IMR-90 (cell line): ENCODE measurements at regions of chr17 and their contacts with region 1.

Region 1: DNA sequence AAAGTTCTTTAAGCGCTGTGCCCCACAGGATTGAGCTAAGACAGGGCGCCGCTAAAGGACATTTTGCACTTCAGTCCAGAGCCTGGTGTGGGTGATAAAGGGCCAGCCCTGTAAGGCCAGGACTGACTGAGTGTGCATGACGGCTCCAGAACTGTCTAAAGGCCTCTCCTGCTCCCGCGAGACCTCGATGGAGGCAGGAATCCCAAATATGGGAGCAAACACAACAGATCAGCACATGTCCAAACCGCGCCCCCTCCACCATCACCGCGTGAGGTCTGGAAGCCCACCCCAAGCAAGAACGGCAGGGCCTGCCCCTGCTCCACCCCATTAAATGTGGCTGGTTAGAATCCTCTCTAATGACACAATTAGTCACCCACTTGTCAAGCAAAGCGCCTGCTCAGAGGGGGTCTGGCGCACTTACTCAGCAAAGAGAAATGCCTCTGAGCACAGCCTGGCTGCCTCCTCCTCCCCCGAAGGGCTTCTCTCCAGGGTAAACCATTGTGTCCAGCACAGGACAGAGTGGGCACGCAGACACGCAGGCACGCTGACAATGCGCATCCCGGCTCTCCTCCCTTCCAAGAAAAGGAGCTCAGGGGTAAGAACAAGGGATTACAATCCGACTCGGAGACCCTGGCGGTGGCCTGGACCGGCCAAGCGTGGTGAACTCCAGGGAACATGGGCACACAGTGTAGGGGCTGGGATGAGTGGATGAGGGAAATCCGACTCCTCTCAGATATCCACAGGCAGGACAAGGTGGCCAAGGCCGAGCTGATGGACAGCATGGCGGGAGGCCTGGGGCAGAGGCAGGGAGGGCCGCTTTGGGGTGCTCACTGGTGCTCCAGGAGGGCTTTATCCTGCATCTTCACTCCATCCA is 1.5 kb downstream of the MXRA7 start:
- DNase-seq: peak; percentile 99
- ATAC-seq: peak; percentile 74
- H3K4me3 ChIP-seq: peak overlapping the region; percentile 58
- H3K27ac ChIP-seq: peak overlapping the region; percentile 90
- H3K4me1 ChIP-seq: peaks cover 27% of the 10 kb centered on the region
- H3K27me3 ChIP-seq: no peaks in the 10 kb centered on the region
- CTCF ChIP-seq: 0 out of 2 replicates have a peak, but pooled peaks have one; percentile 8
- POLR2A ChIP-seq: peak; percentile 97
- RAD21 ChIP-seq: no peak

Region 2: GRCh38 chr17:76687308-76688164 is 21.8 kb before region 1 on chr17:
- CTCF ChIA-PET with region 1: interaction called, 3 read pairs
- POLR2A ChIA-PET with region 1: no interaction called
- dilution Hi-C with region 1: no loop called
- in situ Hi-C with region 1: no loop called
- intact Hi-C with region 1: loop called (anchors 1 kb)
- DNase-seq: no peak
- ATAC-seq: no peak
- H3K4me3 ChIP-seq: no peak overlapping the region
- H3K27ac ChIP-seq: peak overlapping the region; percentile 75
- H3K4me1 ChIP-seq: peaks cover 22% of the 10 kb centered on the region
- H3K27me3 ChIP-seq: no peaks in the 10 kb centered on the region
- CTCF ChIP-seq: no peak
- POLR2A ChIP-seq: no peak
- RAD21 ChIP-seq: no peak